Activated T-helper 1 cell treated with anti-CD3 and anti-CD28 coated beads, Interleukin-12 subunit alpha, Interleukin-12 subunit beta, Interleukin-2, Interleukin-4 antibody, amounts not matched to agents 30 ng/mL and 10 ng/mL and 1 ng/mL, durations not matched to agents 14 hours and 24 hours and 36 hours (primary cell): ENCODE measurements at regions of chr16 and their contacts with region 1.

Region 1: DNA sequence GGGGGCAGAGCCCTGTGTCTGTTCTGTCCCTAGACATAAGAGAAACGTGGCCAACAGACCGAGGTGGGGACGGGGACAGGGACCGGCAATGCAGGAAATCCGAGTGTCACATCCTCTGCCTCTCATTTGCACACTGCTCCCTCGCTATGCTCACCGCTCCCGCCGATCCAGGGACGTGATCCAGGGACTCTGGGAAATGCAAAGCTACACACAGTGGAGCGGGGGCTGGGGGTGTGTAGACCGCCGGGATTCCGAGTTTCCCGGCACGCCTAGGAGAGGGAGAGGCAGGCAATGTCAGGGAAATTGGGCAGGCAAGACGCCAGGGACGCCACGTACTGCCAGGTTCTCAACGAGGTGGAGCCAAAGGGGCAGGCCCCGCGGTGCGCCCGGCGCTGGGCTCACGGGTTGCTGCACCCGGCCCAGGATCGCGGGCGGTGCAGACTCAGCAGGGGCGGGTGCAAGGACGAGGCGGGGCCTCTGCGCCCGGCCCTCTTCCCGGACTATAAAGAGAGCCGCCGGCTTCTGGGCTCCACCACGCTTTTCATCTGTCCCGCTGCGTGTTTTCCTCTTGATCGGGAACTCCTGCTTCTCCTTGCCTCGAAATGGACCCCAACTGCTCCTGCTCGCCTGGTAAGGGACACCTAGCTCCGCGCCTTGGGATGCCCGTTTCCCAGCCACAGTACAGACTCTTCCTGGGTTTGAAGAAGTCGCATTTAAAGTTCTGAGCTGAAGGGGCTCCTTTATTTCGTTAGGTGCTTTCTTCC is at the start of gene MT1X:
- DNase-seq: peak; percentile 86
- H3K4me3 Mint-ChIP-seq: peak within 1 kb of the TSS; percentile 94
- H3K27ac Mint-ChIP-seq: peak within 1 kb of the TSS; percentile 90
- H3K4me1 Mint-ChIP-seq: peaks cover 32% of the 10 kb centered on the region
- H3K27me3 Mint-ChIP-seq: no peaks in the 10 kb centered on the region
- total RNA-seq, gene MT1X: 60.7 and 70.4 TPM in 2 replicates

Region 2: DNA sequence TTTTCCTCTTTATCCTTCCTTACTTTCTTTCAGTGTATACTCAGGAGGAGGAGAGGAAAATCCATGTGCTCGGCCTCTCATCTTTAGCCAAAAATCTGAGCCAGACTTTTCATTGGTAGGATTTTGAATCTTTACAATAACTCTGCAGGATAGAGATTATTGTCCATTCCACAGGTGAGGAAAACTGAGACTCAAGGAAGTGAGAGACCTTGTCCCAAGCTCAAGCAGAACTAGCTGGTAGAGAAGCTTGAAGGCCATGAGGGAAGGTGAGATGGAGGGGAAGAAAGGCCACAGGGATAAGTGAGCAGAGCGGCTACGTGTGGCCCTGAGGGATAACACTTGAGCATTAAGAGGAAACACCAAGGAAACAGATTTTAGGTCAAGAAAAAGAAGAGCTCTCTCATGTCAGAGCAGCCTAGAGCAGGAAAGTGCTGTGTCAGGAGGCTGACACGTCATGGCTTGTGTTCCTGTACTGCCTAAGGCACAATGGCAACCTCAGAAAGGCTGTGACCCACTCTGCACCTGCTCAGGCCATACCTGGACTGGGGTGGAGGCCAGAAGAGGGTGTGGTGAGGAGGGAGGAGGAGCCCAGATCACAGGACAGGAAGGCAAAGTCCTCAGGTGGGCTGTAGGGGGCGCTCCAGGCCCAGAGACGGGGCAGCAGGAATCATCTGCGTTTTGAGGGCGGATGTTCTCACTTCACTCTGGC is 105.4 kb before region 1 on chr16:
- intact Hi-C with region 1: loop called (anchors 1 kb)
- DNase-seq: peak; percentile 81
- H3K4me3 Mint-ChIP-seq: no peak overlapping the region
- H3K27ac Mint-ChIP-seq: no peak overlapping the region
- H3K4me1 Mint-ChIP-seq: peaks cover 10% of the 10 kb centered on the region
- H3K27me3 Mint-ChIP-seq: peaks cover 23% of the 10 kb centered on the region

Region 3: GRCh38 chr16:56643080-56643778 is 38.9 kb before region 1 on chr16:
- intact Hi-C with region 1: loop called (anchors 2 kb)
- DNase-seq: peak; percentile 75
- H3K4me3 Mint-ChIP-seq: peak overlapping the region; percentile 70
- H3K27ac Mint-ChIP-seq: no peak overlapping the region
- H3K4me1 Mint-ChIP-seq: peaks cover 25% of the 10 kb centered on the region
- H3K27me3 Mint-ChIP-seq: peaks cover 52% of the 10 kb centered on the region

Region 4: DNA sequence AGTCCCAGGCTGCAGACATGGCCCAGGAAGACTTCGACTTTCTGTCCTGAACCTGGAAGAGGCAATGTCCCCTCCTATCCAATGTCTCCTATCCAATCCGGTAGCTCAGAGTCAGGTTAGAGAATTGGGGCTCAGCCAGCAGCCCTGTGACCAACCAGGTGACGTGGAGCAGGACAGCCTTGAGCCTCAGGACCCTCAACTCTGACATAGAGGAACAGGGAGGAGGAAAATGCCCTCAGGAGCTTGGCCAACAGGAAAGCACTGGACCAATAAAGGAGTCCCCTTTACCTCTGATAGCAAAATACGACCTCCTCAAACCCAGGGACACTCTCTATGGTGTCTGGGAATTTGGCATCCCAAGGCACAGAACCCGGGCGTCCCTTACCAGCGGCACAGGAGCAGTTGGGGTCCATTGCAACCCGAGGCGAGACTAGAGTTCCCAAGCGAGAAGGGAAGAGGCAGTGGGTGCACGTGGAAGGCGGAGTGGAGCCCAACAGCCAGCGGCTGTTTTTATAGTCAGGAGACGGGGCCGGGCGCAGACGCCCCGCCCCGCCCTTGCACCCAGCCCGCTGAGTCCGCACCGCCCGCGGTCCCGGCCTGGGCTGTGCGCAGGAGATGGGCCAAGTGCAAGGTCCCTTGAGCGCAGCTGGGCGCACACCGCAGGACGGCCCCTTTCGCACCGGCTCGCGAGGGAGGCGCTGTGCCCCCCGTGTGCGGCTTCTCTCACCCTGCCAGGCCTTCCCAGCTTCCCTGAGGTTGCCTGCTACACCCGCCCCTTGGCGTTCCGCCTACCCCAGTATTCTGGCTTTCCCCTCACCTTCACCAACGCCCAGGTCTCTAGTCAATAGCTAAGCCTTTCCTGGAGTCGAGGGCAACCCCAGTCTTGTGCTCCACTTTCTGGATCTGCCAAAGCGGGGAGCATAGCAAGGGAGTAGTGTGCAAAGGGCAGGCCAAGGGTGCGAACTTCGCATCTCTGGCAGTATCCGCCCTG is 14.2 kb before region 1 on chr16 and contains the start of gene MT1G:
- intact Hi-C with region 1: loop called (anchors 2 kb)
- DNase-seq: peak; percentile 41
- H3K4me3 Mint-ChIP-seq: peak within 1 kb of the TSS; percentile 66
- H3K27ac Mint-ChIP-seq: no peak within 1 kb of the TSS
- H3K4me1 Mint-ChIP-seq: peaks cover 55% of the 10 kb centered on the region
- H3K27me3 Mint-ChIP-seq: peaks cover 58% of the 10 kb centered on the region
- total RNA-seq, gene MT1G: 28.5 and 29.1 TPM in 2 replicates

Region 5: DNA sequence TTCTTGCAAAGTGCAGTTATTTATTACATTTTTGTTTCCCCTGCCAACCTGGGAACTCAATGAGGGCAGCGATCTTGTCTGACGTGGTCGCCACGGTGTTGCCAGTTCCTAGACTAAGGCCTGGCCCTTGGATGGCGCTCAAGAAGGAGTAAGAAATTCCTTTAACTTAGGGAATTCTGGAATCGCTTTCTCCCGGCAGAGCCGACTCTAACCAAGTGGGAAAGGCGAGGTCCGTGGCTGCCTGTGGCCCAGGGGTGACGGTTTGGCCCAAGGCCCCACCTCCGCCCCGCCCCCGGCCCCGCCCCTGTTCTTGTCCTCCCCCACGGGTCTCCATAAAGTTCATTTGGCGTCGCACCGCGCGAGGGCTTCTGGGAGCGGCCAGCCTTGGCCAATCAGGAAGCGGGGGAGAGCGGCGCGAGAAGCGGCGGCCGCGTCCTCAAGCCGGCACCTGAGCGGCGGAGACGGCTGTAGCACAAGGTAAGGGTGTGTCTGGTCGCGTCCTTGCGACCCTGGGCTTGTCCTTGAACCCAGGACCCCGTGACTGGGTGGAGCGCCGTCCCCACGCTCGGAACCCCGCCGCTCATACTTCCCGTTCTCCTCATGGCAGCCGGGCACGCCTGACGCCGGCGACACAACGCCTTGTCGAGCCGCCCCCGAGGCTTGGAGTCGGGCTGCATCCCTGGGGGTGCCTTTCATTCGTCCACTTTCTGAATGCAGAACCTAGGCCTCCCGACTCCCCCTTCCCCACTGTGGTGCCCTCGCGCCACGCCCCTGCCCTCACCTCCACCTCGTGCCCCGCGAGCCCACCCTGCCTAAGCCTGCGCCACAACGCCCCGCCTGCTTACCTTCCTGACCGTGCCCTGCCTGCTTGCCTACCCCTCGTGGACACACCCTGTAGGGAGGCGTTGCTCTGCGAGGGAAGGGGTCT is 47.9 kb after region 1 on chr16 and contains the start of gene NUP93:
- intact Hi-C with region 1: loop called (anchors 1 kb)
- DNase-seq: peak; percentile 87
- H3K4me3 Mint-ChIP-seq: no peak within 1 kb of the TSS
- H3K27ac Mint-ChIP-seq: peak within 1 kb of the TSS; percentile 88
- H3K4me1 Mint-ChIP-seq: peaks cover 13% of the 10 kb centered on the region
- H3K27me3 Mint-ChIP-seq: peaks cover 2% of the 10 kb centered on the region
- total RNA-seq, gene NUP93: 150 and 152 TPM in 2 replicates

Region 6: DNA sequence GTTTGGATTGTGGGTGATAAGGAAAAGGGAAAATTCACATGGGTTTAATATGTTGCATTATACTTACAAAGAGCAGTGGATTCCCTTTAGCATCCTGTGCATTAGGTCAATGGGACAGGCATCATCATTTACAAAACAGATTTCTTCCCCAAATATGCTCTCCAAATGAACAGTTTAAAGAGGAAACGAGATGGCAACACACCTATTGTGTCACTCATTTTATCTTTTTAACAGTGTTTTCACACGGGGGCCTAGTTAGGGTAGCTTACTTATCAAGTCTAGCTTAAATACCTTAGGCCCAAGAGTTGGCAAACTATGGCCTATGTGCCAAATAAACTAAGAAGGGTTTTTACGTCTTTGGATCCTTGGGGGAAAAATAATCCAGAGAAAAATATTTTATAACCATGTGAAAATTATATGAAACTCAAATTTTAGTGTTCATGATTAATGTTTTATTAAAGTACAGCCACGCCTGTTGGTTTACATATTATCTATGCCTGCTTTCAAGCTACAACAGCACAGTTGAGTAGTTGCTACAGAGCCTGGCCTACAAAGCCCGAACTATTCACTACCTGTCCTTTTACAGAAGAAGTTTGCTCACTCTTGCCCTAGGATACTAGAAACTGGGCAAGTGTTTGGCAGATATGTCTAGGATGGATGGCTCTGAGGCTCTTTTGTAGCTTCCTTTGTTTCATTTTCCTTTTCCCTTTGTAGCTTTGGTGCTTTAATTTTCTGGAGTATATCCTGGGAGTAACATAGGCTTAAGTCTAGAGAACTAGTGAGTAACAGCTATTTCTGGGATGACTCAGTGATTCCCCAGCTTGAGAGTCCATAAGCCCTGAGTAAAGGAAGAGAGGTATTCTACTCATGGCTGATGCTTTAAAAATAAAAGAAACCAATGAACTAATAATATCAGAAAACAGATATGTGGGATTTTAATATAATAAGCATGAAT is 60.2 kb after region 1 on chr16:
- intact Hi-C with region 1: no loop called
- DNase-seq: no peak
- H3K4me3 Mint-ChIP-seq: no peak overlapping the region
- H3K27ac Mint-ChIP-seq: no peak overlapping the region
- H3K4me1 Mint-ChIP-seq: peaks cover 27% of the 10 kb centered on the region
- H3K27me3 Mint-ChIP-seq: no peaks in the 10 kb centered on the region